Dorsolateral prefrontal cortex (tissue), 120 donors: ENCODE measurements at regions of chr7 and their contacts with region 1.

Region 1: DNA sequence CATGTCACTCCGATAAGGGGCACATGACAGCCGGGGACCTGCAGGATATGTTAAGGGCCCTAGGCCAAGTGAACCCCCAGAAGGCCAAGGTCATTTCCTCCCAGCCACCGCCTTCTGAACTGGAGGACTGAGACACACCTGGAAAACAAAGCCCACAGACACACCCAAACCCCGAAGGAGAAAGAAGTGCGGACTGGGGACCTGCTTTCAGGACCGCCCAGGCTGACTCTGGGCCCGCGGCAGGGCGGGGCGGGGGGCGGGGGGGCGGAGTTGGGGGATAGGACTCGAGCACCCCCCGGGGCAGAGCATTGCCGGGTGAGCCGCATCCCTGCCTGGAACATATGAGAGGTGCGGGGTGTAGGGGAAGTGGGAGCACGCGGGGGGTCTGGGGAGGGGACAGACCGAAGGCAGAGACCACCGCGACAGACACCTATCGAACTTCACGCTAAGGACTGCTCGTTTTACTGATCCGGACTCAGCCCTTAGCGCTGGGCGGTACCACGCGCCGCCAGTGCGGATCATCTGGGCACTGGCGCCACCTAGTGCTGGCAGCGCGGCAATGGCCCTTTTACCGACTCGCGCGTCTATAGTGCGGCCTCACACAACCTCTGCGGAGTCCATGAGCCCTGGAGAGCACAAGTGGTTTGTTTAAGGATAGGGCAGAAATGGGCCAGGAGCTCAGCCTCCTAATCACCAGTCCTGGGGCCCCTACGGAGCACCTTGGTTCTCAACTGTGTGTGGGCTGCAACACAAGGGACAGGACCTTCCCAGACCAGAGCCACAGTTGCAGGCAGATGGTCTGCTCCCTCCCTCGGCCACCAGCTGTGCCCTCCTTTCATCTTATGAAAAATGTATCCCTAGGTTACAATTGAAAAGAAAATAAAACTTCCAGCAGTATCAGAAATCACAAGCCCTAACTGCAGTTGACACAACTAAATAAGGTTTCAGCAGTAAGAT is 157.6 kb downstream of the HERPUD2 start:
- DNase-seq: peak; percentile 66 to 85 (median 76)
- H3K4me3 ChIP-seq: peak overlapping the region; percentile 32 to 70 (median 49)
- H3K27ac ChIP-seq: peak overlapping the region in 1 of 59 donors; percentile 27
- H3K27me3 ChIP-seq: peaks cover 0 to 3% (median 0%) of the 10 kb centered on the region in 45 donors
- CTCF ChIP-seq: peak; percentile 79 to 98 (median 93)

Region 2: GRCh38 chr7:35185907-35186731 is 351.2 kb before region 1 on chr7:
- intact Hi-C with region 1: loop called in 1 of 2 experiments (anchors 5 kb)
- DNase-seq: peak; percentile 35 to 85 (median 80)
- H3K4me3 ChIP-seq: peak overlapping the region; percentile 36 to 72 (median 55)
- H3K27ac ChIP-seq: peak overlapping the region in 39 of 59 donors; percentile 24 to 78 (median 56)
- H3K27me3 ChIP-seq: peaks cover 0 to 20% (median 0%) of the 10 kb centered on the region in 45 donors
- CTCF ChIP-seq: peak in 4 of 56 donors; percentile 10 to 18 (median 14)

Region 3: GRCh38 chr7:35424869-35425495 is 112.4 kb before region 1 on chr7:
- intact Hi-C with region 1: loop called in 1 of 2 experiments (anchors 10 kb)
- DNase-seq: no peak
- H3K4me3 ChIP-seq: no peak overlapping the region
- H3K27ac ChIP-seq: no peak overlapping the region
- H3K27me3 ChIP-seq: peaks cover 0 to 30% (median 0%) of the 10 kb centered on the region in 45 donors
- CTCF ChIP-seq: peak; percentile 30 to 76 (median 62)